ENCODE measurements at regions of chr6 and their contacts with region 1.

Region 1: GRCh38 chr6:108052706-108053105 is 21.8 kb downstream of the OSTM1 start:
- DNase-seq: no peak
- CTCF ChIP-seq: no peak

Region 2: GRCh38 chr6:107982486-107982885 is 70.2 kb before region 1 on chr6:
- CTCF ChIA-PET with region 1: interaction called, 40 read pairs
- POLR2A ChIA-PET with region 1: no interaction called
- DNase-seq: no peak
- CTCF ChIP-seq: no peak

Region 3: GRCh38 chr6:108020472-108021116 is 32.1 kb before region 1 on chr6:
- CTCF ChIA-PET with region 1: interaction called, 8 read pairs
- POLR2A ChIA-PET with region 1: interaction called, 10 read pairs
- DNase-seq: no peak
- CTCF ChIP-seq: no peak

Region 4: DNA sequence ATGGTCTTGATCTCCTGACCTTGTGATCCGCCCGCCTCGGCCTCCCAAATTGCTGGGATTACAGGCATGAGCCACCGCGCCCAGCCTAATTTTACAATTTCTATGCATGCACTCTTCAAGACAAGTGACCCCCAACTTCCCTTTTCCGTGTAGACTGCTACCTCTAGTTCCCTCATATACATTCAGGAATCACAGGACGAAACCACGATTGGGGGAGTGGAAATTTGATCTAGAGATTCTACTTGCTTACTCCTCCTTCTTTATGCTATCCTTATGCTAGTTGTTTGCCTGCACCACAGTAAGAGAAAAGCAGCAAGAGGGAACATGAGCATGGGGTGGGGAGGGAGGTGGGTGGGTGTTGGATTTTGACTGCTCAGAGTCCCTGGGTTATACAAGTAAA is 13.0 kb before region 1 on chr6:
- CTCF ChIA-PET with region 1: interaction called, 23 read pairs
- POLR2A ChIA-PET with region 1: no interaction called
- DNase-seq: no peak
- CTCF ChIP-seq: no peak

Region 5: GRCh38 chr6:108395297-108395696 is 342.6 kb after region 1 on chr6:
- CTCF ChIA-PET with region 1: no interaction called
- POLR2A ChIA-PET with region 1: no interaction called
- DNase-seq: no peak
- CTCF ChIP-seq: no peak